ENCODE measurements at regions of chr1 and their contacts with region 1.

Region 1: GRCh38 chr1:205658943-205659581 is 21.2 kb downstream of the SLC45A3 start:
- DNase-seq: peak; percentile 46
- H3K4me3 ChIP-seq: no peak overlapping the region
- H3K27ac ChIP-seq: no peak overlapping the region
- H3K4me1 ChIP-seq: peaks cover 6% of the 10 kb centered on the region
- H3K27me3 ChIP-seq: no peaks in the 10 kb centered on the region
- CTCF ChIP-seq: peak; percentile 81 to 95

Region 2: GRCh38 chr1:205440476-205441317 is 218.4 kb before region 1 on chr1:
- CTCF ChIA-PET with region 1: interaction called, 20 read pairs
- dilution Hi-C with region 1: no loop called
- in situ Hi-C with region 1: no loop called
- intact Hi-C with region 1: no loop called
- DNase-seq: peak; percentile 98
- H3K4me3 ChIP-seq: no peak overlapping the region
- H3K27ac ChIP-seq: peak overlapping the region; percentile 80
- H3K4me1 ChIP-seq: peaks cover 54% of the 10 kb centered on the region
- H3K27me3 ChIP-seq: no peaks in the 10 kb centered on the region
- CTCF ChIP-seq: no peak

Region 3: DNA sequence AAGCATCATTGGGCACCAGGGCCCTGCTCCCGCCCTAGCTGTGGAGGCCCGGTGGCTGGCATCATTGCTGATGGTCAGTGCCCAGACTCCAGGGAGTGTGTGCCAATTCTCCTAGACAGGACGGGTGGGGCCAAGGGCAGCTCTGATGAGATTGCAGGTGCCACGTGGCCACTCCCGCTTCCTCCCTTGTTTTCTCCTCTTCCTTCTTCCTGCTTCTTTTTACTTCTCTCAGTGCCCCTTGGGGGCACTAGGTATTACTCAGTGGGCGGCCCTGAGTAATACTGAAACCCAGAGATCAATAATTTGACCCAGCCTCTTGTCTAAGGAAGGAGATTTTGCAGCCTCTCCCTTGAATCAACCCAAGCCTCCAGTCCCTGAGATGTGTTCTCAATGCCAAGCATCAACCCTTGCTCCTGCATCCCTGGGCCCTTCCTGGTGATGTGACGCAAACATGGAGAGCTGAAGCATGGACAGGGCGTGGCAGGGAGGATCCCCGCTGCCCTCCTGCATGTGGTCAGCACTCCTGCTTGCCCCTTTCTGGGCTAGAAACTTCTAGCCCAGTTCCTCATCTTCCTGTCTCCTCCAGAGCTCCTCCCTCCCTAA is 122.2 kb before region 1 on chr1:
- CTCF ChIA-PET with region 1: no interaction called
- dilution Hi-C with region 1: no loop called
- in situ Hi-C with region 1: loop called in 1 of 2 experiments (anchors 10 kb)
- intact Hi-C with region 1: no loop called
- DNase-seq: no peak
- H3K4me3 ChIP-seq: no peak overlapping the region
- H3K27ac ChIP-seq: no peak overlapping the region
- H3K4me1 ChIP-seq: no peaks in the 10 kb centered on the region
- H3K27me3 ChIP-seq: no peaks in the 10 kb centered on the region
- CTCF ChIP-seq: no peak

Region 4: DNA sequence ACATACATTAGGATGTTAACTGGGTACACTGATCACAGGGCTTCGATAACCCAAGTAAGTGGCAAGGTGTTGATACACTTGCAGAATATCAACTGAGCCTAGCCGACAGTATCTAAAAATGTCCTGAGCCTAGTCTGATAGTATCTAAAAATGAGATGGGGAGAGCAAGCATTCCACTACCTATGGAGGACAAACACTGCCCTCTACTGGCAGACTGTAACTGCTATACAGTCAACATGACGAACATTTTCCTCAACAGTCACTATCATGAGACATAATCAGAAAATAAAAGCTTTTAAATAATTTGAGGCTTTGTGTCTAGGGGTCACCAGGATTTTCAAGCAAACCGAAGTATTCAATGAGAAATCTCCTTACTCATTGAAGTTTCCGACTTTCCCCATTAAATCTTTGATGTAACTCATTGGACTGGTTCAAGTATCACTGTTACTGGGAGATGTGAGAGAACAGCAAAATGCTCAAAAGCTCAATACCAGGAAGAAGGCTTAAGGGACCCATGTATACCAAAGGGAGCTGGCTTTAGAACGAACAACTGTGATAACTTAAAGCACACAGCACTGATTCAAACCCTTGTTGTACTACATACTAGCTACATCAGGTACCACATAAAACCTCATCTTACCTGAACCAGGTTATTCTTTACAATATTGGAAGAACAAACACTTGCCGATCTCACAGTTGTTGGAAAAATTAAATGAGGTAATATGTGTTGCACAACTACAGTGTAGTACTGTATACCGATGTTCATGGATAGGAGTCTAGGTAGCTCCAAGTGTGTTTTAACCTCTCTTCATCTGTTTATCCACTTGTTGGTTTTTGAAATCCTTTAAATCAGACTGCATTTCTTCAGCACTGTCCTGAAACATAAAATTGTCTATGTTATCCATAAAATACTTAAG is 52.3 kb after region 1 on chr1:
- CTCF ChIA-PET with region 1: interaction called, 3 read pairs
- dilution Hi-C with region 1: loop called (anchors 5 kb)
- in situ Hi-C with region 1: loop called in 1 of 2 experiments (anchors 5 kb)
- intact Hi-C with region 1: loop called (anchors 1 kb)
- DNase-seq: peak; percentile 55
- H3K4me3 ChIP-seq: no peak overlapping the region
- H3K27ac ChIP-seq: no peak overlapping the region
- H3K4me1 ChIP-seq: peaks cover 12% of the 10 kb centered on the region
- H3K27me3 ChIP-seq: no peaks in the 10 kb centered on the region
- CTCF ChIP-seq: peak; percentile 89 to 95

Region 5: DNA sequence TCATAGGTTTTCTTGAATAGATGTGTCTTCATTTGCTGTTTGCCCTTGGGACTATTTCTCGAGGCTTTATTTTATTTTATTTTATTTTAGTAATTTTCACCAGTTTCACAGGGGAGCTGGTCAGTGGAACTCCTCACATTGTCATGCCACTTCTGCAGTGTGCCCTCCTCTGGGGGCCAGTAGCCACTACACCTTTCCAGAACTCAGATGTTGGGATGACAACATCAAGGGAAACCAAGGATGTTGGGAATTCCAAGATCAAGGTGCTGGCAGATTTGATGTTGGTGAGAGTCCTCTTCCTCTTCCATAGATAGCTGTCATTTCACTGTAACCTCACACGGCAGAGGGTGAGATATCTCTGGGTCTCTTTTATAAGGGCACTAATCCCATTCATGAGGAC is 248.7 kb after region 1 on chr1:
- CTCF ChIA-PET with region 1: no interaction called
- dilution Hi-C with region 1: no loop called
- in situ Hi-C with region 1: loop called in 1 of 2 experiments (anchors 25 kb)
- intact Hi-C with region 1: loop called (anchors 1 kb)
- DNase-seq: peak; percentile 30
- H3K4me3 ChIP-seq: no peak overlapping the region
- H3K27ac ChIP-seq: no peak overlapping the region
- H3K4me1 ChIP-seq: peaks cover 5% of the 10 kb centered on the region
- H3K27me3 ChIP-seq: no peaks in the 10 kb centered on the region
- CTCF ChIP-seq: peak; percentile 72 to 77

Measured in mammary epithelial cell (primary cell).